Activated CD4-positive, alpha-beta T cell treated with anti-CD3 and anti-CD28 coated beads, Interleukin-2, amount 10 ng/mL, durations not matched to agents 7 days and 5 days (primary cell): ENCODE measurements at regions of chr2 and their contacts with region 1.

Region 1: GRCh38 chr2:219029829-219030165 is 11.5 kb downstream of the CFAP65 start:
- DNase-seq: peak; percentile 76
- H3K4me3 Mint-ChIP-seq: no peak overlapping the region
- H3K27ac Mint-ChIP-seq: no peak overlapping the region
- H3K4me1 Mint-ChIP-seq: no peaks in the 10 kb centered on the region
- H3K27me3 Mint-ChIP-seq: peaks cover 18% of the 10 kb centered on the region

Region 2: DNA sequence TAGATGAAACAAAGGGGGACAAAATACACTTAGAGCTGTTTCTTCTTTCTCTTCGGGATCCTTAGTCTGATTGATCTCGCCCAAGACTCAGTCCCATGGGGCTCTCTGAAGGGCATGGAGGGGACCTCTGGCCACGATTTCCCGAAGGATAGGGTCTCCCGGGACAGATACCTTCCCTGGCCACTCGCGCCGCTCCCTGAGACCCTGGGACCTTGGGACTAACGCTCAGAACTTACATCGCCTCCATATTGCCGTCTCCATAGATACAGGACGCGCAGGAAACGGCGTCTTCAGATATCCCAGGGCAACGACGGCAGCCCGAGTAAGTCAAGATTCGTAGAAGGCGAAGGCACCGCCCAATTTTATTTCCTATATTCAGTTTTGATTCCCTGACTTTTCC is 11.5 kb after region 1 on chr2 and contains the start of gene CFAP65:
- CTCF ChIA-PET with region 1: interaction called, 12 read pairs
- POLR2A ChIA-PET with region 1: no interaction called
- DNase-seq: peak; percentile 47
- H3K4me3 Mint-ChIP-seq: peak within 1 kb of the TSS; percentile 23
- H3K27ac Mint-ChIP-seq: no peak within 1 kb of the TSS
- H3K4me1 Mint-ChIP-seq: peaks cover 4% of the 10 kb centered on the region
- H3K27me3 Mint-ChIP-seq: peaks cover 45% of the 10 kb centered on the region
- total RNA-seq, gene CFAP65: not detected

Region 3: DNA sequence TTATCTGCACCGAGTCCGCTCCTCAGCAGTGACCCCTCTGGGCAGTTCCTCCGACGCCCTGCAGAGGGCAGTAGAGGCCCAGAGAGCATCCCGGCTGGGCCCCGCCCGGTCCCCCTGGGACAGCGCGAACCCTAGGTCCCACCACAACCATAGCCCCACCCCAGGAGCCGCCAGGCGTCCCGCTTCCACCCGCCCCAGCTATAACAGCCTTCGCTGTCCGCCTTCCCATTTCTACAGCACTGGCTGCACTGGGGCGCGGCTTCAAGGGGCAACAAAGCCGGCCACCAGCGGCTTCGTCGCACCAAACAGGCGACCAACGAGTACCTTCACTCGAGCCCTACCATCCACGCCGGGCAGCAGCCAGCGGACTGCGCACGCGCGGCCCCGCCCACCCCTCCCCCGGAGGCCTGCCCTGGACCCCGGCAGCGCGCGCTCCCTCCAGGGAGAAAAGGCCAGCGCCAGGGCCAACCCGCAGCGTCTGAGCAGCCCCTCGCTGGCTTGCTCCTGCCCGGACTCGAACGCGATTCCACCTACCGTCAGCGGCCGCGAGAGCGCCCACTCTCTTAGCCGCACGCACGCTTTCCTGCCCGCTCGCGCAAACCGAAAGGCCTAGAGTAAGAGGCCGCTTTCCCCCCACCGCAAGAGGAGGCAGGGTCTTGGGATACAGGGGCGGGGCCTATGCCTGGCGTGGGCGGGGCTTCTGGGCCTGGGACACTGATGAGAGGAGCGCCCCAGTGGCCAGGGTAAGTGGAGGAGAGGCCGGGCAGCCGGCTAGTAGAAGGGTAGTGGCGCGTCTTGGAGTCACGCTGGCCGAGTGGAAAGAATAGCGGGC is 130.6 kb after region 1 on chr2 and contains the start of gene NHEJ1:
- CTCF ChIA-PET with region 1: interaction called, 14 read pairs
- POLR2A ChIA-PET with region 1: no interaction called
- DNase-seq: peak; percentile 92
- H3K4me3 Mint-ChIP-seq: peak within 1 kb of the TSS; percentile 84
- H3K27ac Mint-ChIP-seq: peak within 1 kb of the TSS; percentile 96
- H3K4me1 Mint-ChIP-seq: peaks cover 31% of the 10 kb centered on the region
- H3K27me3 Mint-ChIP-seq: no peaks in the 10 kb centered on the region
- total RNA-seq, gene NHEJ1: 18.1 to 20.3 TPM